Breast epithelium (tissue), 4 donors: ENCODE measurements at regions of chr13 and their contacts with region 1.

Region 1: GRCh38 chr13:82717249-82717648 is 1165.0 kb downstream of the SLITRK1 start:
- DNase-seq: no peak
- H3K4me3 ChIP-seq: no peak overlapping the region
- H3K27ac ChIP-seq: no peak overlapping the region
- H3K4me1 ChIP-seq: no peaks in the 10 kb centered on the region
- H3K27me3 ChIP-seq: no peaks in the 10 kb centered on the region
- CTCF ChIP-seq: no peak
- POLR2A ChIP-seq: no peak

Region 2: DNA sequence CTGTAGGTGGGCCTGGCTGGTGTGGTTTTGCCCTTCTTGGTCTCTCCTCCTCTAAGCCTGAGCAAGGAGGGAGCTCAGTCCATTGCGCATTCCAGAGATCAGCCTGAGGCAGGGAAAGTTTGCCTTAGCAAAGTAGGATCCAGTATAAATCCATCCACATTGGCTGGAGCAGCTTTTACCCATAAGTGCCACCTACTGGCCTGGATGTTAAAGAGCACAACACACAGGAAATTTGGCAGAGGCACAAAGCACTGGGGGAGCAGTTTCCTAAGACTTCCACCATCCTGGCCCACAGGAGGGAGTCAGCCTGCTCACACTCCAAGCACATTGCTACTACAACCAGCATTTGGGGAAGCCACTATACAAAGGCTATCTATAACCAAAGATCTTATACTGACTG is 40.8 kb after region 1 on chr13:
- intact Hi-C with region 1: loop called (anchors 2 kb)
- DNase-seq: no peak
- H3K4me3 ChIP-seq: no peak overlapping the region
- H3K27ac ChIP-seq: no peak overlapping the region
- H3K4me1 ChIP-seq: no peaks in the 10 kb centered on the region
- H3K27me3 ChIP-seq: no peaks in the 10 kb centered on the region
- CTCF ChIP-seq: no peak
- POLR2A ChIP-seq: no peak